ENCODE measurements at regions of chr3 and their contacts with region 1.

Region 1: GRCh38 chr3:114624571-114625181 is 330.8 kb downstream of the TIGIT start:
- DNase-seq: peak; percentile 77
- H3K4me3 Mint-ChIP-seq: peak overlapping the region; percentile 84
- H3K27ac Mint-ChIP-seq: peak overlapping the region; percentile 99
- H3K4me1 Mint-ChIP-seq: peaks cover 59% of the 10 kb centered on the region
- H3K27me3 Mint-ChIP-seq: no peaks in the 10 kb centered on the region
- CTCF ChIP-seq: no peak

Region 2: GRCh38 chr3:114179575-114179974 is 445.1 kb before region 1 on chr3:
- CTCF ChIA-PET with region 1: no interaction called
- intact Hi-C with region 1: no loop called
- DNase-seq: peak; percentile 28
- H3K4me3 Mint-ChIP-seq: no peak overlapping the region
- H3K27ac Mint-ChIP-seq: no peak overlapping the region
- H3K4me1 Mint-ChIP-seq: no peaks in the 10 kb centered on the region
- H3K27me3 Mint-ChIP-seq: peaks cover 86% of the 10 kb centered on the region
- CTCF ChIP-seq: no peak

Region 3: DNA sequence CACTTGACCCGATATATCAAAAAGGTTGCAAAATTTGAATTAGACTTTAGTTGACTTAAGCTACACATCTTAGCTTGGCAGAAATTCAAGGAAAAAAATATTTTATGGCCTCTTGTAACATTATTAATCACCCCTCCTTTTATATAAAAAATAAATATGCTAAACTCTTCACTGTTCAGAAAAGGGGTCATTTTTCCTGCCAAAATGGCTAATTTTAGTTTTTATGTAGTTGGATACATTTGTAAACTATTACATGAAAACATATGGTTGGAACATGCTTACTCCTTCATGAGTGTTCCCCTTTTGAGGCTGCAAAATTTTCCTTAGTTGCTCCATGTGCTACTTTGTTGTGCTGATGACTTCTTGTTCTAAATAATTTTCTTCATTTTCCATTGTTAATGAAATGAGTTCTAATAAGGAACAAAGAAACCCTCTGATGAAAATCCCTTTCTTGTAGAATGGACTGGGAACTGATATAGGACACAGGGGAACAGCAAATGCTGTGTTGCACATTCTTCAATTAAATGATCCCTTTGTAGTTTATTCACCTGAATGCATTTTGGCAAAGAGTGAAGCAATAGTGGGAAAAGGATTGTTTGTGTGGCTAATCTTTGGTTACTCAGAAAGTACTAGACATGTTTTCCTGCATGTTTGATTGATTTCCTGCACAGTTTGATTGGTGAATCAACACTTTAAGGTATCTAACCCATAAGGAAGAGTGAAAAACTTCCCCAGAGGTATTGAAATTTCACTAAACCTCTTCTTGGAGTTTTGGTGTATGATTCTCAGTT is 18.5 kb after region 1 on chr3:
- CTCF ChIA-PET with region 1: interaction called, 3 read pairs
- intact Hi-C with region 1: loop called (anchors 2 kb)
- DNase-seq: no peak
- H3K4me3 Mint-ChIP-seq: no peak overlapping the region
- H3K27ac Mint-ChIP-seq: peak overlapping the region; percentile 47
- H3K4me1 Mint-ChIP-seq: peaks cover 34% of the 10 kb centered on the region
- H3K27me3 Mint-ChIP-seq: no peaks in the 10 kb centered on the region
- CTCF ChIP-seq: no peak

Region 4: DNA sequence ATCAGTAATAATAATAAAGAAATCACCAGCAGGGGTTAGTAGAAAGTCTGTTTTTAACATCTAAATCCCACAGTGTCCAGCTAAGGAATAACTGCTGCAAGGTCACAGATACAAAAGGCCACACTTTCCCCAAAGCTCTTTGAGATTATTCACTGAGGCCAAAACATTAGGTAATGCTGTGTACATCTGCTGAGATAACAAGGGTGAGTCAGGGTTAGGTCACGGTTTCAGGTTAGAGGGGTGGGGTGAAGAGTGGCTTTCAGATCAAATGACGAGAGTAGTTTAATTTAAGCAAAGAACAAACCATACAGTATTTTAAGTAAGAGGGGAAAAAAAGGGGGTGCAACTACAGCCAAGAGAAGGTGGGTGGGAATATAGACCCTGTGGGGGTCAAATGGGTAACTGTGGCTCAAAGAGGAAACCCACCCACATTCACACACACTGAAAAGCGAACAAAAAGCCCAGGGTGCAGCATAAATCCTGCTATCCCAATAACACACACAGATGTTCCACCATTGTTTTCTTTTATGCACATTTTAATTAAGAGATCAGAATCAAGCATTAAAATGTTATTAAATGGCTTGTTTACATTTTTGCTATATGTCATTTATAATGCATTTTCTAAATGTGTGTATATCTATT is 82.0 kb after region 1 on chr3:
- CTCF ChIA-PET with region 1: no interaction called
- intact Hi-C with region 1: loop called (anchors 5 kb)
- DNase-seq: peak; percentile 37
- H3K4me3 Mint-ChIP-seq: peak overlapping the region; percentile 42
- H3K27ac Mint-ChIP-seq: peak overlapping the region; percentile 56
- H3K4me1 Mint-ChIP-seq: peaks cover 44% of the 10 kb centered on the region
- H3K27me3 Mint-ChIP-seq: no peaks in the 10 kb centered on the region
- CTCF ChIP-seq: no peak

Measured in Calu3 (cell line).